Panc1 (cell line): ENCODE measurements at regions of chr7 and their contacts with region 1.

Region 1: GRCh38 chr7:134432296-134433152 is 26.4 kb downstream of the AKR1B1 start:
- DNase-seq: peak; percentile 94
- ATAC-seq: peak; percentile 99
- H3K4me3 ChIP-seq: peak overlapping the region; percentile 47 to 74
- H3K27ac ChIP-seq: peak overlapping the region; percentile 62; the same call in 1 of the 2 replicates
- H3K4me1 ChIP-seq: peaks cover 3% of the 10 kb centered on the region; the same call in 1 of the 2 replicates
- H3K27me3 ChIP-seq: no peaks in the 10 kb centered on the region
- CTCF ChIP-seq: peak; percentile 77

Region 2: GRCh38 chr7:134513169-134513752 is 80.7 kb after region 1 on chr7:
- CTCF ChIA-PET with region 1: interaction called, 9 read pairs
- POLR2A ChIA-PET with region 1: no interaction called
- in situ Hi-C with region 1: no loop called
- intact Hi-C with region 1: loop called (anchors 1 kb)
- DNase-seq: peak; percentile 58
- ATAC-seq: peak; percentile 77
- H3K4me3 ChIP-seq: no peak overlapping the region
- H3K27ac ChIP-seq: no peak overlapping the region
- H3K4me1 ChIP-seq: peaks cover 5% of the 10 kb centered on the region; the same call in 1 of the 2 replicates
- H3K27me3 ChIP-seq: peaks cover 2% of the 10 kb centered on the region; the same call in 1 of the 2 replicates
- CTCF ChIP-seq: peak; percentile 82

Region 3: DNA sequence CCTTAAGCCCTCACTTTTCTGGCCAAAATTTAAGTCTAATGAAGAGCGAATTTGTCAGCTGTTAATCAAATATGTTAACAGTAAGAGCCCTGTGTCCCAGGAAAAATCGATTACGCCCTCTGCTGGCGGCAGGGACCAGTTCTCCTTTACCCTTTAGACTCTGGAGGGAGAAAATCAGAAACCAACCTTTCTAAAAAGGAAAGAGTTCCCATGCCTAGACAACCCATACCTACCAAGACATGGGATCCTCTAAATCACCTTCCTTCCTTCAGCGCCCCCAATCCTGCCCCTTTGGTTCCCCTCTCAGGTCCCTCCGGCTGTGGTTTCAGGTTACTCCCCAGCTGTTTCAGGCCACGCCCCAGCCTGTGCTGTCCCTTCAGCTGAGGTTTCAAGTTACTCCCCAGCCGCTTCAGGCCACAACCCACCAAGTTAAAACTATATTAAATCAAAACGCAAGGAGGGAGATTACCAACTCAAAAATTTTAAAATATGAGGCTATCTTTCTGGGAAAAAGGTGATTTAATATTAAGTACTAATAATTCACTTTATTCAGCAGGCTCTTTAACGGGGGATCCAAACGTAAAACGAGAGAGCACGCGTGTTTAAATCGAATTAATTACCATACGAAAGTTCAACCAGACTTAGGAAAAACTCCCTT is 115.0 kb after region 1 on chr7:
- CTCF ChIA-PET with region 1: interaction called, 9 read pairs
- POLR2A ChIA-PET with region 1: no interaction called
- in situ Hi-C with region 1: no loop called
- intact Hi-C with region 1: loop called (anchors 1 kb)
- DNase-seq: peak; percentile 69
- ATAC-seq: peak; percentile 90
- H3K4me3 ChIP-seq: peak overlapping the region in 1 of 2 experiments; percentile 46; a peak in 2 of 4 replicates
- H3K27ac ChIP-seq: no peak overlapping the region
- H3K4me1 ChIP-seq: no peaks in the 10 kb centered on the region
- H3K27me3 ChIP-seq: peaks cover 7% of the 10 kb centered on the region
- CTCF ChIP-seq: peak; percentile 89

Region 4: GRCh38 chr7:134605973-134606923 is 173.7 kb after region 1 on chr7:
- CTCF ChIA-PET with region 1: interaction called, 6 read pairs
- POLR2A ChIA-PET with region 1: no interaction called
- in situ Hi-C with region 1: no loop called
- intact Hi-C with region 1: loop called (anchors 1 kb)
- DNase-seq: no peak
- ATAC-seq: peak; percentile 97
- H3K4me3 ChIP-seq: no peak overlapping the region
- H3K27ac ChIP-seq: no peak overlapping the region
- H3K4me1 ChIP-seq: no peaks in the 10 kb centered on the region
- H3K27me3 ChIP-seq: peaks cover 2% of the 10 kb centered on the region; the same call in 1 of the 2 replicates
- CTCF ChIP-seq: peak; percentile 94

Region 5: DNA sequence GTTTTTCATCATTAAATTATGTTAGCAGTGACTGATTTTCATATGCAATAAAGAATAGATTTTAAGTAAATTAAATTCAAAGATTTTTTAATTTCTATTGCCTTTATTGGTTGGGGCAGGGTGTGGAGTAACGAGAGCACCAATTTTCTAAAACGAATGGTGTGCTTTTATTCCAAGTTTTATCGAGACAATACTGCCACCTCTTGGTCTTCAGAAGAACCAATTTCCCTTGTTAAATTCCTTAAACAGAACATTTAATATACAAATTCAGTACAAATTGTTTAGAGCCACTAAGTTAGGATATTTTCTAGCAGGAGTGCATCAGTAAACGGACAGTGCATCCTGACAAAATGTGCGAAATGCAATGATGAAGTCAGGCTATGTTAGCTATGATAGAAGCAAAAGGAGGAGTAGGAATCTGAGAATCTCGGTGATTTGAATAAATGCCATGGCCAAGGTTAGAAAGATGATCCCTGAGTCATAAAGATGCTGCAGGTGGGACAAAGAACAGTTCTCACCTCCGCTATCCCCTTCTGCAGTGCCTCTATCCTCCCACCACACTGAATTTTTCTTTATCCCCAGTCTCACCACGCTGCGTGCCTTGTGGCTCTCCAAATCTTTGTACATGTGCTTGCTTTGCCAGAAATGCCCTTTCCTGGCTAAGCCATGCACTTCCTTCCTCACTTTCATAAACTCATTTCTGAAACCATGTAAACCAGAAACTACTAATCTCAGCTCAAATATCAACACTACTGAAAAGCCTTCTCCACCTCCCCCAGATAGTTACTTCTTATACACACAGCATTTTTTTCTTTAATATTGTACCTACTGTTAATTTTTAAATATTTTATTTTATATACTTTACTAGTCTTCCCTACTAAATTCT is 521.9 kb after region 1 on chr7:
- CTCF ChIA-PET with region 1: no interaction called
- POLR2A ChIA-PET with region 1: no interaction called
- in situ Hi-C with region 1: no loop called
- intact Hi-C with region 1: loop called (anchors 10 kb)
- DNase-seq: no peak
- ATAC-seq: no peak
- H3K4me3 ChIP-seq: no peak overlapping the region
- H3K27ac ChIP-seq: no peak overlapping the region
- H3K4me1 ChIP-seq: no peaks in the 10 kb centered on the region
- H3K27me3 ChIP-seq: no peaks in the 10 kb centered on the region
- CTCF ChIP-seq: peak; percentile 69; the same call in 1 of the 2 replicates